AG04449 (cell line): ENCODE measurements at regions of chr22 and their contacts with region 1.

Region 1: DNA sequence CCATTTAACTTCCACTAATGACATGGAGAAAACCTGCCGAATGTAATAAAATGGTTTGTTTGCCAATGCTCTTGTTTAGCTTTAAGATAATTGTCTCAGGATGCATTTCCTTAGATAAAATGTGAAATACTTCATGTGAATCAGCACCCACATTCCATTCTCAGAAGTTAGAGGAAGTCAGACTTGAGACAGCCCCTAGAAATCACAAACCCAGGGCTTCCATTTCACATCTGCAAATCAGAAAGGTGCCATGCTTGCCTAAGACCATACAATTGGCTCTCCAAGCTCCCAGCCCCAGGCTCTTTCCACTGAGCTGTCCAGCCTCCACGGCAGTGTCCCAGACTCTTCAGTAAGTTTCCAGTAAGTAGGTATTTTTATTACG is 35.6 kb upstream of the ADORA2A start:
- DNase-seq: peak; percentile 62
- H3K4me3 ChIP-seq: no peak overlapping the region
- CTCF ChIP-seq: no peak

Region 2: GRCh38 chr22:24402460-24403192 is 10.8 kb after region 1 on chr22:
- CTCF ChIA-PET with region 1: interaction called, 11 read pairs
- POLR2A ChIA-PET with region 1: interaction called, 3 read pairs
- DNase-seq: peak; percentile 86
- H3K4me3 ChIP-seq: no peak overlapping the region
- CTCF ChIP-seq: no peak

Region 3: GRCh38 chr22:24532103-24532520 is 140.3 kb after region 1 on chr22:
- CTCF ChIA-PET with region 1: no interaction called
- POLR2A ChIA-PET with region 1: no interaction called
- DNase-seq: no peak
- H3K4me3 ChIP-seq: no peak overlapping the region
- CTCF ChIP-seq: no peak